SK-N-SH (cell line): ENCODE measurements at regions of chr4 and their contacts with region 1.

Region 1: GRCh38 chr4:56387023-56388001 is at the start of gene AASDH:
- DNase-seq: peak; percentile 86
- H3K4me3 ChIP-seq: peak within 1 kb of the TSS; percentile 90
- H3K27ac ChIP-seq: peak within 1 kb of the TSS; percentile 98
- H3K4me1 ChIP-seq: peaks cover 0 to 12% of the 10 kb centered on the region in 2 experiments; a peak in 3 of 4 replicates
- H3K27me3 ChIP-seq: no peaks in the 10 kb centered on the region
- CTCF ChIP-seq: no peak
- EP300 ChIP-seq: peak in 1 of 2 experiments; percentile 17; a peak in 1 of 4 replicates
- RAD21 ChIP-seq: no peak; the same call in 1 of the 2 replicates
- polyA plus RNA-seq, gene AASDH: 4.4 and 5.6 TPM in 2 replicates

Region 2: DNA sequence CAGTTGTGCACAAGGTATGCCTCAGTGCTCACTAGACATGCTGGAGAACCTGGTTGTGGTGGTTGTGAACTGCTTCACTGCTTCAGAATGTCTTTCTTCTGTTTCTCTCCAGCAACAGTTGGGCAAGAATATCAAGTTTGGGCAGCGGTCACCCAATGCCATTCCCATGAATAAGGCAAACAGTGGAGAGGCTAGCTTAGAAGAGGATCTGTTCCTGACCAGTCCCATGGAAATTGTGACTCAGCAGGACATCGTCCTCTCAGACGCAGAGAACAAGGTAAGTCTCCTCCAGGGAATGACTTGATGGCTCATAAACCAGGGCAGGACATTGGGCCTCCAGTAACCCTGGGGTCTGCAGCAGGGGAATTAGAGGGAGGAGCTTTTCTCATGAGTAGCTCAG is 79.9 kb before region 1 on chr4:
- CTCF ChIA-PET with region 1: no interaction called
- POLR2A ChIA-PET with region 1: interaction called, 12 read pairs
- DNase-seq: no peak
- H3K4me3 ChIP-seq: no peak overlapping the region
- H3K27ac ChIP-seq: no peak overlapping the region
- H3K4me1 ChIP-seq: peaks cover 0 to 22% of the 10 kb centered on the region in 2 experiments; a peak in 2 of 4 replicates
- H3K27me3 ChIP-seq: no peaks in the 10 kb centered on the region
- CTCF ChIP-seq: no peak
- EP300 ChIP-seq: no peak
- RAD21 ChIP-seq: no peak

Region 3: DNA sequence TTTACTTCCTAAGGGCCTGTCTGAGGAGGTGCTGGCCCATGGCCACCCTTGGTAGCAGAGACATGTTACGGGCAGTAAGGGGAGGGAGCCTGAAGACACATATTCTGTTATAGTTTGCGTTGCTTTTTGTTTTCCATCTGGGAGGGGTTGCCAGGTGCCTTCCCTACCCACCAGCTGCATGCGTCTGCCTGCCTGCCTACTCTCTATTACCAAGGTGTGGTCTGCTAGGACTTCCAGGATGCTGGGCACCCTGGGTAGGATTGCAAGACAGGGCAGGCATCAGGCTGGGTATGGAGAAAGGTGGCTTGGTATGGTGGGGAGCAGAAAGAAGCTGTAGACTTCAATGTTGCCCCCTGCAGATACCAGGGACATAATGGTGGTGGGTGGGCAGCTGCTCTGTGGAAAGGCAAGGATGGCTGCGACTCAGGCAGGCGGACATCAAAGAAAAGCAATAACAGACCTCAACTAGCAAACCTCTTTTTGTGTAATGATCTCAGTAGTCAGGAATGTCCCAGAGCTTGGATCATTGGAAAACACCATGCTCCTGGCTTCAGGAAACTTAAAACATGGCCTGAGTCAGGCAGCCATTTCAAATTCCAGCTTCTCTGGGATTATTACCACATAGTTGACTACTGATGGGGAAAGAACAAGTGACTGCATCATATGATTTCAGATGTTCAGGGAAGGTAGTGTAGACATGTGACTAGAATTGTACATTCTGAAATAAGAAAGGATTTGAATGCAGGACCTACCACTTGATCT is 226.0 kb after region 1 on chr4:
- CTCF ChIA-PET with region 1: no interaction called
- POLR2A ChIA-PET with region 1: no interaction called
- DNase-seq: no peak
- H3K4me3 ChIP-seq: no peak overlapping the region
- H3K27ac ChIP-seq: no peak overlapping the region
- H3K4me1 ChIP-seq: no peaks in the 10 kb centered on the region
- H3K27me3 ChIP-seq: no peaks in the 10 kb centered on the region
- CTCF ChIP-seq: no peak
- EP300 ChIP-seq: no peak
- RAD21 ChIP-seq: no peak